Heart right ventricle (tissue), 16 donors: ENCODE measurements at regions of chr12 and their contacts with region 1.

Region 1: GRCh38 chr12:25894759-25895158 is 63.7 kb upstream of the RASSF8 start:
- DNase-seq: no peak
- ATAC-seq: no peak
- H3K4me3 ChIP-seq: no peak overlapping the region
- H3K27ac ChIP-seq: no peak overlapping the region
- H3K4me1 ChIP-seq: no peaks in the 10 kb centered on the region
- H3K27me3 ChIP-seq: no peaks in the 10 kb centered on the region
- CTCF ChIP-seq: no peak

Region 2: GRCh38 chr12:24499151-24500146 is 1395.3 kb before region 1 on chr12:
- intact Hi-C with region 1: loop called in 1 of 10 experiments (anchors 5 kb)
- DNase-seq: no peak
- ATAC-seq: peak in 4 of 8 donors; percentile 33 to 75 (median 55)
- H3K4me3 ChIP-seq: no peak overlapping the region
- H3K27ac ChIP-seq: peak overlapping the region in 6 of 10 donors; percentile 9 to 58 (median 46)
- H3K4me1 ChIP-seq: peaks cover 0 to 10% (median 4%) of the 10 kb centered on the region in 9 donors
- H3K27me3 ChIP-seq: no peaks in the 10 kb centered on the region
- CTCF ChIP-seq: no peak